ENCODE measurements at regions of chr4 and their contacts with region 1.

Region 1: DNA sequence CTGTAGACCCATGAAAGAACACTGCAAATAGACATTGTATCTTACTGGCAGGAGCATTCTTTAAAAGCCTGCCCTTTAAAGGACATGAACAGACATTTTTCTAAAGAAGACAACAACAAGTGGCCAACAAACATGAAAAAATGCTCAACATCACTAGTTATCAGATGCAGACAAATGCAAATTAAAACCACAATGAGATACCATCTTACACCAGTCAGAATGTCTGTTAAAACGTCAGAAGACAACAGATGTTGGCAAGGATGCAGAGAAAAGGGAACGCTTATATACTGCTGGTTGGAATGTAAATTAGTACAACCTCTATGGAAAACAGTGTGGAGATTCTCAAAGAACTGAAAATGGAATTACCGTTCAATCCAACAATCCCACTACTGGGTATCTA is 77.2 kb downstream of the ATP10D start:
- DNase-seq: no peak
- ATAC-seq: no peak
- H3K4me3 Mint-ChIP-seq: no peak overlapping the region
- H3K27ac Mint-ChIP-seq: no peak overlapping the region
- H3K4me1 Mint-ChIP-seq: peaks cover 4% of the 10 kb centered on the region
- H3K27me3 Mint-ChIP-seq: no peaks in the 10 kb centered on the region

Region 2: GRCh38 chr4:46844325-46844917 is 717.9 kb before region 1 on chr4:
- CTCF ChIA-PET with region 1: no interaction called
- POLR2A ChIA-PET with region 1: no interaction called
- intact Hi-C with region 1: loop called in 1 of 2 experiments (anchors 2 kb)
- DNase-seq: peak; percentile 65
- ATAC-seq: no peak
- H3K4me3 Mint-ChIP-seq: no peak overlapping the region
- H3K27ac Mint-ChIP-seq: no peak overlapping the region
- H3K4me1 Mint-ChIP-seq: no peaks in the 10 kb centered on the region
- H3K27me3 Mint-ChIP-seq: no peaks in the 10 kb centered on the region

Region 3: DNA sequence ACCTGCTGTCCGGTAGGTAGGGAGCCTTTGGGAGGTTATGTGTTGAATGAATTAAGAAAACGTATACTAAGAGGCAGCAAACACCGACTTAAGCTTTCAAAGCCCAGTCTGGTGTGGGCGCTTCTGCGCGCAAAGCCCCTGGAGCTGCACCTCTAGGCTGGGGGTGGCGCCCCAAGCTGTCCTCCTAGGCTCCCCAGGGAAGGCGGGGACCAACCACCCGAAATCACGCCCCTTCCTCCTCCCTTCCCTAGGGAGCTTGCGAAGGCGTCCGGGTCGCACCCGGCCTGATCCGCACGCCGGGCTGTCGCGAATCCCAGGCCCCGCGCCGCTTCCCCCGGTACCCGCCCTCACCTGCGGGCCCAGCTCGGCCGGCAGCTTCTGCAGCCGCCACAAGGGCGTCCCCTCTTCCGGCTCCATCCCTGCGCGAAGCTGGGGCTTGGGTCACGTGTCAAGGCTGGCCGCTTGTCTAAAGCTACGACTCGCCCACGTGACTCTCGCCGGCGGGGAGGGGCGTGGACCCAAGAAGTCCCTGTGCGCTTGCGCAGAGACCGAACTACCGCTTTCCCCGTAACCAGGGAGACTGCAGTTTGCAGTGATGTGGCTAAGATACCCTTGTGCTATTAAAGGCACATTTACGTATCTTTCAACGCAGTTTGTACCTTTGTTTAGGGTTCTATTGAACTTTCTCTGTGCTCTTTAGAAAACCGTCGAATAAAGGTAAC is 98.9 kb before region 1 on chr4 and contains the start of gene COMMD8:
- CTCF ChIA-PET with region 1: interaction called, 16 read pairs
- POLR2A ChIA-PET with region 1: no interaction called
- intact Hi-C with region 1: loop called in 1 of 2 experiments (anchors 1 kb)
- DNase-seq: peak; percentile 98
- ATAC-seq: peak; percentile 97
- H3K4me3 Mint-ChIP-seq: peak within 1 kb of the TSS; percentile 82
- H3K27ac Mint-ChIP-seq: peak within 1 kb of the TSS; percentile 52
- H3K4me1 Mint-ChIP-seq: peaks cover 31% of the 10 kb centered on the region
- H3K27me3 Mint-ChIP-seq: no peaks in the 10 kb centered on the region
- total RNA-seq, gene COMMD8: 15.0 to 26.5 TPM

Region 4: GRCh38 chr4:47490550-47490949 is 71.7 kb before region 1 on chr4:
- CTCF ChIA-PET with region 1: interaction called, 8 read pairs
- POLR2A ChIA-PET with region 1: no interaction called
- intact Hi-C with region 1: loop called (anchors 2 to 5 kb)
- DNase-seq: peak; percentile 38
- ATAC-seq: peak; percentile 97
- H3K4me3 Mint-ChIP-seq: no peak overlapping the region
- H3K27ac Mint-ChIP-seq: no peak overlapping the region
- H3K4me1 Mint-ChIP-seq: peaks cover 25% of the 10 kb centered on the region
- H3K27me3 Mint-ChIP-seq: no peaks in the 10 kb centered on the region

Region 5: DNA sequence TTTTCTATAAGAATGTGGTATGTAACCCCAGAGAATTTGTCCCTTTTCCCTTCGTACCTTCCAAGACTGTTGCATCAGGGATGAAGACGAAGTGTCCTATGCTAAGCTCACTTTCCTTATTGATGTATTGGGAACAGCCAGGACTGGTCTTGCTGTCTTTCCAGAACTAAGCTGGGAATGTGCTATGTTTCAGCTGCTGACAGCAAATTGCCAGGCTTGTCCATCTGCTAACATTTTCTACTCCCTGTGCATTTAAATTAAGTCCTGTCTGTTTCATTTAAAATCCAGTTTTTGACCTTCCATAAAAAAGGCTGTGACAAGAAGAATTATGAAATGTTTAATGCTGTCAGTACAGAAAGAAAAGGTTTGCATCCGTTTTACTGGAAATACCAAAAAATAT is 10.7 kb after region 1 on chr4:
- CTCF ChIA-PET with region 1: interaction called, 10 read pairs
- POLR2A ChIA-PET with region 1: no interaction called
- intact Hi-C with region 1: no loop called
- DNase-seq: no peak
- ATAC-seq: no peak
- H3K4me3 Mint-ChIP-seq: no peak overlapping the region
- H3K27ac Mint-ChIP-seq: no peak overlapping the region
- H3K4me1 Mint-ChIP-seq: no peaks in the 10 kb centered on the region
- H3K27me3 Mint-ChIP-seq: peaks cover 2% of the 10 kb centered on the region

Measured in activated CD4-positive, alpha-beta T cell treated with anti-CD3 and anti-CD28 coated beads for 36 hours (primary cell).